Right ventricle myocardium inferior (tissue), 1 donor: ENCODE measurements at regions of chr17 and their contacts with region 1.

Region 1: GRCh38 chr17:49997791-49998703 is 3.0 kb upstream of the DLX3 start:
- DNase-seq: no peak
- ATAC-seq: peak; percentile 80

Region 2: DNA sequence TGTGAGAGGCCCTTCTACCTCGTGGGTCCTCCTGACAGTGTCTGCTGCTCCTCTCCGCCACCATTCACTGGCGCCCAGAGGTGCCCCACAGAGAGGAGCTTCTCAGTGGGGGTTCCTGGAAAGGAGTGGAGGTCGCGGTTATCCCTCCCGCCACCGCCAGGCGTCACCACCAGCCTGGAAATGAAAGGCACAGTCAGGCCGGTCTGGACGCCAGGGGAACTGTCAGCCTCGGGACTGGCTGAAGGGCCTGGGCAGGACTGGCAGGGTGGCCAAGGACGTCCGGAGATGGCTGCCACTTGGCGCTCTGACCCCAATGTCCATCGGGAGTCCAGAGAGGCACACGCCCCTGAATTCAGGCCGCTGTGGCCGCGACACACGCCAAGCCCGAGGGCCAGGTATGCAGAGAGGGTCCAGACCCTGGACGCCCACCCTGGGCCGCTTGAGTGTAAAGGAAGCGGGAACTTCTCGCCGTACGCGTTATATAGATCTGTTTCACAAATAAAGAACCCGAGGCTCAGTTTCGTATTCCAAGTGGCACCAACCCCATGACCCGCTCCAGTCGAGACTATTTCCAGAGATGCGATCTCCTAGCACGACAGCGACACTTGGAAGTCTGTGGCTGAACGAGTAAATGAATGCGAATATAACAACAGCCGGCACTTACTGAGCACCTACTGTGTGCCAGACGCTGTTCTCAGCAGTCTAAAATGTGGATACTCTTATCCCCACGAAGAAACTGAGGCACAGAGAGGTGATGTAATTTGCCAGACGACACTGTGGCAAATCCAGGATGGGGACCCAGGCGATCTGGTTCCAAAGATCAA is 430.0 kb before region 1 on chr17:
- intact Hi-C with region 1: loop called (anchors 1 kb)
- DNase-seq: peak; percentile 94
- ATAC-seq: peak; percentile 75

Region 3: DNA sequence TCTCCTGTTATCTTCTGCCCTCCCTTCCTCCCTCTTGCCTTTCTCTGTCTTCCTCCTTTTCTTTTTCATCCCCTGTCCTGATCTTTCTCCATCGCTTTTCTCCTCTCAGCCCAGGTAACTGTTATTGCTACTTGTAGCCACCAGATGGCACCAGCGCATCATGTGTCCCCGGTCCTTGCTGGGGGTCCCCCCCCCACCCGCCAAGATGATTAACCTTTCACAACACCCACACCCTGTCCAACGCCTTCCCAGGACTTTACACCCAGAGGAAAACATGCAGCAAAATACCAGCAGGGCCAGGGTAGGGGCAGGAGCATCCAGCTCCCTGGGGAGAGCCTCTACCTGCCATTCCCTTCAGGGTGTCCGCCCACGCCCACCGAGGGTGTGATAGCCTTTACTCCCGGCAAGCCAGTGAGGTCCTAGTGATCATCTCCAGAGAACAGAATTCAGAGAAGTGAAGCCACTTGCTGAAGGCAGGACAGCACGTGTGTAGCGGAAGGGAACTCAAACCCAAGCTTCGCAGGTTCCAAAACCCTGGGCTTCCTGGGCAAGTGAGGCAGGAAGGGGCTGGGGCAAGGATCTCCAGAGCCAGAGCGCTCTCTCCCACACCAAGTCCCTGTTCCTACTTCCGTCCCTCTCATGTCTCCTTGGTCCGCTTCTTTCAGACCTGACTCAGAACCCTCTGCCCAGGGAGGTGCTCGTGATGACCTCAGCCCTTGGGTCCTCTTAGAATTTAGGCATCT is 136.7 kb before region 1 on chr17:
- intact Hi-C with region 1: loop called (anchors 1 kb)
- DNase-seq: no peak
- ATAC-seq: peak; percentile 5

Region 4: GRCh38 chr17:49880291-49881053 is 117.6 kb before region 1 on chr17:
- intact Hi-C with region 1: loop called (anchors 1 kb)
- DNase-seq: no peak
- ATAC-seq: peak; percentile 90

Region 5: GRCh38 chr17:49952209-49952911 is 45.7 kb before region 1 on chr17:
- intact Hi-C with region 1: loop called (anchors 5 kb)
- DNase-seq: peak; percentile 85
- ATAC-seq: peak; percentile 64